Pancreas (tissue), 10 donors: ENCODE measurements at regions of chr12 and their contacts with region 1.

Region 1: DNA sequence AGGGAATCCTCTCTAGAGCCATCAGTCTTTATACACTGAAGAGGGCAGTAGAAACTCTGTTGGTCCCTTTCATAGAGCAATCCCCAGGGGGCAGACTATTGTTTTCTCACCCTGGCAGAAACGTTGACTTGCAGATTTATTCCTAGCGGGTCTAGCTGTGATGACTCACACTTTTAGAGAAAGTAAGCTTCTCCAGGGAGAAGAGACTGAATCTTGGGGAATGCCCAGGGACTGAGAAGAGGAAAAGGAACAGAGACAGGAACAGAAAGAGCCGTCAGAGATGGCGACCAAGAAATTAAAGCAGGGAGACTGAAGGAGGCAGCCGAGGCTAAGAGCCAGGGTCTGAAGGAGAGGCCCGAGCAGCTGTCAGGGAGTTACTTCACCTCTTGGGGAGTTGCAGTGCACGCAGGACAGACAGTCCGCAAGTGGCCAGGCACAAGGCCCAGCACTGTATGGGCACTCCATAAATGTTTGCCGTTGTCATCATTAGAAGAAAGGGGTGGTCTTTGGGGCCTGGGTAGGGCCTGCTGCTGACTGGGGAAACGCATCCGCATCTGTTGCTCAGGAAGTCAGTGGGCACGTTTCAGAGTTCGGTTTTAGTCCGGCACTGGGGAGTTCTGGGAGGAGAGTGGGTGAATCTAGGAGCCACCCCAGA is 13.0 kb downstream of the PLEKHG6 start:
- DNase-seq: peak in 2 of 6 donors; percentile 52 to 61
- ATAC-seq: peak; percentile 53 to 80 (median 75)
- H3K4me3 ChIP-seq: no peak overlapping the region
- H3K27ac ChIP-seq: peak overlapping the region in 3 of 4 donors; percentile 1 to 68 (median 66)
- H3K4me1 ChIP-seq: peaks cover 0 to 41% (median 0%) of the 10 kb centered on the region in 3 donors
- H3K27me3 ChIP-seq: no peaks in the 10 kb centered on the region
- CTCF ChIP-seq: peak in 3 of 4 donors; percentile 16 to 48 (median 20)

Region 2: DNA sequence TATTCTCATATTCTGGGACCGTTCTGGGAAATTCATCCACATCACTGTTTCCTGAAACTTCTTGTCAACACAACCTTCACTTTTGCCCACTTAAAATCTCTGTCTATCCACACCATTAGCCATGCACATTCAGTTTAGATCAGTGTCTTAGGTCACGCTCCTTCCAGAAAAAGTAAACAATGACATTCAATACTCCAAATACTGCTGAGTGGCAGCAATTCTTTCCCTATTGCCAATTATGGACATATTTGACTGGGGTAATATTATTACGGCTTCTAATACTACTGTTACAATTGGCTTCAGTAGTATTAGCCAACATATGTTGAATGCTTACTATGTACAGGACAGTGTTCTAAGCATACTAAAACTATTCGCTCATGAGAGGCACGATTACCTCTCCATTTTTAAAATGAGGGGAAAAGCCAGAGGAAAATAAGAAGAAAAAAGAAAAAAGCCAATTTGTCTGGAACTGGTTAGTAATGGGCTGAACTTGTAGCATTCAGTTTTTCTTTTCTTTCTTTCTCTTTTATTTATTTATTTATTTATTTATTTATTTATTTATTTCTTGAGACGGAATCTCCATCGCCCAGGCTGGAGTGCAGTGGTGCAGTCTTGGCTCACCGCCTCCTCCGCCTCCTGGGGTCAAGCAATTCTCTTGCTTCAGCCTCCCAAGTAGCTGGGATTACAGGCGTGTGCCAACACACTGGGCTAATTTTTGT is 83.9 kb after region 1 on chr12:
- intact Hi-C with region 1: no loop called
- DNase-seq: no peak
- ATAC-seq: no peak
- H3K4me3 ChIP-seq: no peak overlapping the region
- H3K27ac ChIP-seq: no peak overlapping the region
- H3K4me1 ChIP-seq: no peaks in the 10 kb centered on the region
- H3K27me3 ChIP-seq: no peaks in the 10 kb centered on the region
- CTCF ChIP-seq: no peak

Region 3: DNA sequence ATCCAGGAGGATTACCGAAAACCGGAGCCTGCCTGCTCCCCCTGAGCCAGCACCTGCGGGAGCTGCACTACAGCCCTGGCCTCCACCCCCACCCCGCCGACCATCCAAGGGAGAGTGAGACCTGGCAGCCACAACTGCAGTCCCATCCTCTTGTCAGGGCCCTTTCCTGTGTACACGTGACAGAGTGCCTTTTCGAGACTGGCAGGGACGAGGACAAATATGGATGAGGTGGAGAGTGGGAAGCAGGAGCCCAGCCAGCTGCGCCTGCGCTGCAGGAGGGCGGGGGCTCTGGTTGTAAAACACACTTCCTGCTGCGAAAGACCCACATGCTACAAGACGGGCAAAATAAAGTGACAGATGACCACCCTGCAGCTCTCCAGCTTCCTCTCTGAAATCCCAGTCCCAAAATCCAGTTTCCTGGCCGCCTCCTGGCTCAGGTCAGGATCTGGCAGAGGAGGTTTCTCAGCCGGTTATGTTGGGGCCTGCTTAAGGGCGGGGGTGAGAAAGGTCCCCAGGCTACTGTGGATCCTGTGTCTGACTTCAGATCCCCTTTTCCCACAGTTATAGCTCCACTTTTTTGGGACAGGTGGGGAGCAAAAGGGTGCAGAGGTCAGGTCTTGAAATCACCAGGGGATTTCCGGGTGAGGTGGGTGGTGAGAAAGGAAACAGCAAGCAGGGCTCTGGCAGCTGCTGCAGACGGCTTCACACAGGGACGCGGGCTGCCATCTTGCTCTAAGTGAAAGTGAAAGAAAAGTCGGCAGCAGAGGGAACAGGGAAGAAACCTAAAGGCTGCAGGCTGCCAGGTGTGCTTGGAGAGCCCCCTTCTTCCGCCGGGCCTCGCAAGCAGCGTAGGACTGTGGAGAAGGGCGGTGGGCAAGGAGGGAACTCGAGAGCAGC is 128.1 kb after region 1 on chr12 and contains the start of gene TAPBPL:
- intact Hi-C with region 1: loop called in 1 of 3 experiments (anchors 10 kb)
- DNase-seq: peak; percentile 80 to 91 (median 82)
- ATAC-seq: peak; percentile 86 to 92 (median 89)
- H3K4me3 ChIP-seq: peak within 1 kb of the TSS; percentile 54 to 70 (median 60)
- H3K27ac ChIP-seq: peak within 1 kb of the TSS; percentile 84 to 97 (median 94)
- H3K4me1 ChIP-seq: peaks cover 0 to 12% (median 0%) of the 10 kb centered on the region in 3 donors
- H3K27me3 ChIP-seq: no peaks in the 10 kb centered on the region
- CTCF ChIP-seq: no peak
- total RNA-seq, gene TAPBPL: 7.8 to 25.5 (median 12.6) TPM

Region 4: GRCh38 chr12:6534945-6535696 is 211.7 kb after region 1 on chr12:
- intact Hi-C with region 1: loop called in 1 of 3 experiments (anchors 5 kb)
- DNase-seq: peak; percentile 62 to 90 (median 76)
- ATAC-seq: peak; percentile 23 to 52 (median 41)
- H3K4me3 ChIP-seq: peak overlapping the region; percentile 94 to 99 (median 96)
- H3K27ac ChIP-seq: peak overlapping the region; percentile 82 to 98 (median 89)
- H3K4me1 ChIP-seq: peaks cover 13 to 15% (median 15%) of the 10 kb centered on the region in 3 donors
- H3K27me3 ChIP-seq: no peaks in the 10 kb centered on the region
- CTCF ChIP-seq: no peak